ENCODE measurements at regions of chr12 and their contacts with region 1.

Region 1: GRCh38 chr12:133080368-133081158 is at the start of gene ZNF140:
- DNase-seq: peak; percentile 98
- ATAC-seq: peak; percentile 71
- H3K4me3 Mint-ChIP-seq: no peak within 1 kb of the TSS
- H3K27ac Mint-ChIP-seq: no peak within 1 kb of the TSS
- H3K4me1 Mint-ChIP-seq: peaks cover 16% of the 10 kb centered on the region
- H3K27me3 Mint-ChIP-seq: no peaks in the 10 kb centered on the region
- CTCF ChIP-seq: peak; percentile 43
- total RNA-seq, gene ZNF140: 10.6 to 12.3 TPM

Region 2: GRCh38 chr12:132986001-132986912 is 94.3 kb before region 1 on chr12 and contains the start of gene ZNF26:
- CTCF ChIA-PET with region 1: no interaction called
- POLR2A ChIA-PET with region 1: interaction called, 12 read pairs
- intact Hi-C with region 1: loop called (anchors 1 kb)
- DNase-seq: peak; percentile 92
- ATAC-seq: peak; percentile 96
- H3K4me3 Mint-ChIP-seq: peak within 1 kb of the TSS; percentile 80
- H3K27ac Mint-ChIP-seq: peak within 1 kb of the TSS; percentile 92
- H3K4me1 Mint-ChIP-seq: peaks cover 26% of the 10 kb centered on the region
- H3K27me3 Mint-ChIP-seq: peaks cover 5% of the 10 kb centered on the region
- CTCF ChIP-seq: no peak
- total RNA-seq, gene ZNF26: 19.1 to 19.8 TPM

Region 3: GRCh38 chr12:133037207-133038005 is 43.2 kb before region 1 on chr12 and contains the start of gene ZNF84:
- CTCF ChIA-PET with region 1: interaction called, 3 read pairs
- POLR2A ChIA-PET with region 1: no interaction called
- intact Hi-C with region 1: loop called (anchors 1 kb)
- DNase-seq: peak; percentile 97
- ATAC-seq: peak; percentile 96
- H3K4me3 Mint-ChIP-seq: peak within 1 kb of the TSS; percentile 84
- H3K27ac Mint-ChIP-seq: peak within 1 kb of the TSS; percentile 97
- H3K4me1 Mint-ChIP-seq: peaks cover 14% of the 10 kb centered on the region
- H3K27me3 Mint-ChIP-seq: no peaks in the 10 kb centered on the region
- CTCF ChIP-seq: no peak
- total RNA-seq, gene ZNF84: 23.5 to 24.1 TPM

Region 4: DNA sequence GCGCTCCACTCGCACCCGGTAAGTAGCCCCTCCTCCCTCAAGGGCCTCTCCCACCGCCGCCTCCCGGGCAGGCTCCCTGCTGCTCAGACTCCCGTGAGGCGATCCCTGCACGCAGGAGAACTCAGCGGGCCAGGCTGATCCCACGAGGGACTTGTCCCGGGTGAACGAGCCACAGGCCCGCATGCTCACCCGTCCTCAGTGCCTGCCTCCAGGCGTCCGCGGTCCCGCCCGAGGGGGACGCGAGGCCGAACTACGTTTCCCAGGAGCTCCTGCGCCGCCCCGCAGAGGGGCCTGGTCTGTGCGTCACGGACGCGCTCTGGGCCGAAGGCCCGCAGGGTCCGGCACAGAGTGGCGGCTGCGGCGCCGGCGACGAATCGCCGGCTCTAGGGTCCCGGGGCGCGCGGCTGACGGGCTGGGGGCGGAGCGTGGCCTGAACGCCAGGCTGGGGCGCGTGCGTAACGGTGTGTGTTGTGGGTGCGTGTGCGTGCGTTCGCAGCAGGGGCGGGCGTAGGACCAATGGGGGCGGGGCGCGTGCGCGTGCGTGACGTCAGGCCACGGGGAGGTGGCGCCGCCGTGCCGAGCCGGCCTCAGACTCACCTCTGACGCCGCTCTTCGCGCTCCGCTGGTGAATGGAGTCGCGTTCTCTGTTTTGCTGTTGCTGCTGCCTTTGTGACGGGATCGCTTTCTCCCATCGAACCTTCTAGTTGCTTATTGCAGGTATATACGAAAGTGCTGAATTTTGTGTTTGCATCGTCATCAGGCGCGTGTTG is 49.7 kb after region 1 on chr12 and contains the starts of genes ZNF10 and ZNF891:
- CTCF ChIA-PET with region 1: no interaction called
- POLR2A ChIA-PET with region 1: interaction called, 5 read pairs
- intact Hi-C with region 1: loop called (anchors 2 kb)
- DNase-seq: peak; percentile 97
- ATAC-seq: peak; percentile 93
- H3K4me3 Mint-ChIP-seq: peak within 1 kb of the TSS; percentile 89
- H3K27ac Mint-ChIP-seq: peak within 1 kb of the TSS; percentile 99
- H3K4me1 Mint-ChIP-seq: peaks cover 12% of the 10 kb centered on the region
- H3K27me3 Mint-ChIP-seq: no peaks in the 10 kb centered on the region
- CTCF ChIP-seq: no peak
- total RNA-seq, gene ZNF10: 6.0 to 7.2 TPM
- total RNA-seq, gene ZNF891: 1.7 to 1.8 TPM

Region 5: DNA sequence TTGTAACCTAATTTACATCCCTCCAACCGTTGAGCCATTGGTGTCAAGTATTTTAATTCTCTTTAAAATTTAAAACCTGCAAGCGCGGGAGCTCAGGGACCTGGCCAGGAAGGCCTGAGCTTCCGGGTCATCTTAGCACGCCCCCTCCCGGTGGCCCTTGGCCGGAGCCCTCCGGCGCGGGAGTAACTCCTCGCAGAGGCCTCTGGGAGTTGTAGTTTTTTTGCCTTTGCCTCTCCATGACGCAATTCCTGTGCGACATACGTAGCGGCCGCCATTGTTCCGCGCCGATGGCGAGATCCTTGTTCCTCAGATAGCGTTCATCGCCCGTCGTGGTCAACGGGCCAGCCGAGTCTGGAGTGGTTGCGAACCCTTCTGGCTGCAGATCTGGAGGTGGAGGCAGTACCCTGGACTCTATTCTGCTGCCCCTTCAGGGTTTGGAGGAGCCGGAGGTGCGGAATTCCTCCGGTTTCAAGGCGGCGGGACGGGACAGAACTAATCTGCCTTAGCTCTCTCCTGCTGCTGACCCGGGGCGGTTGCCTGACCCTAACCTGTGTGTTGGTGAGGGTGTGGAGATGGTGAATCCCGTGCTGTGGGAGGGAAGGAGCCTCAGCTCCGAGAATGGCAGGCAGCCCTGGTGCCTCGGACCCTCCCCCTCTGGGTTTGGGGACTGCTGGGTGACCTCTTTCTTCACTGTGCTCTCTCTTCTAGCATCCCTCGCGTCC is 100.8 kb after region 1 on chr12 and contains the start of gene ZNF268:
- CTCF ChIA-PET with region 1: interaction called, 3 read pairs
- POLR2A ChIA-PET with region 1: interaction called, 4 read pairs
- intact Hi-C with region 1: loop called (anchors 1 kb)
- DNase-seq: peak; percentile 95
- ATAC-seq: peak; percentile 97
- H3K4me3 Mint-ChIP-seq: peak within 1 kb of the TSS; percentile 96
- H3K27ac Mint-ChIP-seq: peak within 1 kb of the TSS; percentile 92
- H3K4me1 Mint-ChIP-seq: peaks cover 23% of the 10 kb centered on the region
- H3K27me3 Mint-ChIP-seq: no peaks in the 10 kb centered on the region
- CTCF ChIP-seq: peak; percentile 72
- total RNA-seq, gene ZNF268: 12.7 to 14.0 TPM

Measured in activated CD8-positive, alpha-beta T cell treated with anti-CD3 and anti-CD28 coated beads for 36 hours (primary cell).